ENCODE measurements at regions of chr11 and their contacts with region 1.

Region 1: GRCh38 chr11:67317205-67317887 is 14.0 kb downstream of the SSH3 start:
- DNase-seq: peak; percentile 96 to 98 (median 98)
- H3K4me3 ChIP-seq: peak overlapping the region; percentile 64
- H3K27ac ChIP-seq: peak overlapping the region; percentile 87 to 89
- H3K4me1 ChIP-seq: peaks cover 2% of the 10 kb centered on the region
- H3K27me3 ChIP-seq: no peaks in the 10 kb centered on the region
- CTCF ChIP-seq: peak; percentile 95 to 100 (median 99)
- EP300 ChIP-seq: no peak
- POLR2A ChIP-seq: peak; percentile 43

Region 2: DNA sequence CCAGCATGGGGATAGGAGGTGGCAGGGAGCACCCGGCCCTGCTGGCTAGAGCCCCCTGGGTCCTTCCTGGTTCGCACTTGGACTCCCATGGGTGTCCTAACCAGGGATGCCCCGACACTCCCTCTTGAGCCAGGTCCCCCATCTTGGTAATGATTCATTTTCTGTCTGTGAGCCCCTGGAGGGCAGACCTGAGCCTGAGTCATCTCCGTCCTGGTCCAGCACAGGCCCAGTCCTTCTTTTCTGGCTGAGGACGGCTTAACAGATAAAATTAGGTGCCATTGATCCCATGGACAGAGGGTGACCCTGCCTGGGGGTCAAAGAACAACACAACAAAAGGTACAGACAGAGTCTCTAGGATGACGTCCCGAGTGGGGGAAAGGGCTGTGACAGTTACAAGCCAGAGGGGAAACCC is 257.2 kb before region 1 on chr11:
- intact Hi-C with region 1: loop called in 1 of 4 experiments (anchors 10 kb)
- DNase-seq: no peak
- H3K4me3 ChIP-seq: no peak overlapping the region
- H3K27ac ChIP-seq: no peak overlapping the region
- H3K4me1 ChIP-seq: peaks cover 1% of the 10 kb centered on the region
- H3K27me3 ChIP-seq: no peaks in the 10 kb centered on the region
- CTCF ChIP-seq: no peak
- EP300 ChIP-seq: no peak
- POLR2A ChIP-seq: no peak

Region 3: GRCh38 chr11:67082035-67082791 is 235.1 kb before region 1 on chr11:
- intact Hi-C with region 1: loop called in 1 of 4 experiments (anchors 5 kb)
- DNase-seq: peak in 3 of 5 donors; percentile 20 to 44 (median 32)
- H3K4me3 ChIP-seq: no peak overlapping the region
- H3K27ac ChIP-seq: no peak overlapping the region
- H3K4me1 ChIP-seq: no peaks in the 10 kb centered on the region
- H3K27me3 ChIP-seq: no peaks in the 10 kb centered on the region
- CTCF ChIP-seq: no peak
- EP300 ChIP-seq: no peak
- POLR2A ChIP-seq: no peak

Region 4: GRCh38 chr11:67265633-67266423 is 51.5 kb before region 1 on chr11:
- intact Hi-C with region 1: loop called (anchors 1 to 5 kb)
- DNase-seq: peak; percentile 70 to 90 (median 82)
- H3K4me3 ChIP-seq: peak overlapping the region; percentile 16
- H3K27ac ChIP-seq: peak overlapping the region; percentile 67 to 72
- H3K4me1 ChIP-seq: peaks cover 25% of the 10 kb centered on the region
- H3K27me3 ChIP-seq: no peaks in the 10 kb centered on the region
- CTCF ChIP-seq: peak; percentile 59 to 93 (median 91)
- EP300 ChIP-seq: no peak
- POLR2A ChIP-seq: no peak

Measured in ovary (tissue), 10 donors.